A549 (cell line): ENCODE measurements at regions of chr18 and their contacts with region 1.

Region 1: GRCh38 chr18:36808681-36809080 is 20.1 kb downstream of the TPGS2 start:
- DNase-seq: no peak
- ATAC-seq: no peak
- H3K4me3 ChIP-seq: no peak overlapping the region
- H3K27ac ChIP-seq: no peak overlapping the region
- H3K4me1 ChIP-seq: no peaks in the 10 kb centered on the region
- CTCF ChIP-seq: no peak
- EP300 ChIP-seq: no peak
- POLR2A ChIP-seq: no peak
- RAD21 ChIP-seq: no peak

Region 2: GRCh38 chr18:36792634-36793283 is 15.9 kb before region 1 on chr18:
- CTCF ChIA-PET with region 1: interaction called, 11 read pairs
- POLR2A ChIA-PET with region 1: no interaction called
- DNase-seq: no peak
- ATAC-seq: no peak
- H3K4me3 ChIP-seq: no peak overlapping the region
- H3K27ac ChIP-seq: no peak overlapping the region
- H3K4me1 ChIP-seq: no peaks in the 10 kb centered on the region
- CTCF ChIP-seq: no peak
- EP300 ChIP-seq: no peak
- POLR2A ChIP-seq: no peak
- RAD21 ChIP-seq: no peak

Region 3: GRCh38 chr18:36872329-36872728 is 63.6 kb after region 1 on chr18:
- CTCF ChIA-PET with region 1: no interaction called
- POLR2A ChIA-PET with region 1: no interaction called
- DNase-seq: no peak
- ATAC-seq: no peak
- H3K4me3 ChIP-seq: no peak overlapping the region
- H3K27ac ChIP-seq: no peak overlapping the region
- H3K4me1 ChIP-seq: no peaks in the 10 kb centered on the region
- CTCF ChIP-seq: no peak
- EP300 ChIP-seq: no peak
- POLR2A ChIP-seq: no peak
- RAD21 ChIP-seq: no peak